Pancreas (tissue), 10 donors: ENCODE measurements at regions of chr1 and their contacts with region 1.

Region 1: GRCh38 chr1:17119773-17120480 is 676 bp upstream of the PADI2 start:
- DNase-seq: no peak
- ATAC-seq: peak in 2 of 4 donors; percentile 4 to 18
- H3K4me3 ChIP-seq: peak overlapping the region in 1 of 4 donors; percentile 34
- H3K27ac ChIP-seq: no peak overlapping the region
- H3K4me1 ChIP-seq: peaks cover 0 to 3% (median 0%) of the 10 kb centered on the region in 3 donors
- H3K27me3 ChIP-seq: no peaks in the 10 kb centered on the region
- CTCF ChIP-seq: no peak

Region 2: GRCh38 chr1:17335821-17336710 is 216.1 kb after region 1 on chr1:
- intact Hi-C with region 1: loop called in 2 of 3 experiments (anchors 5 to 10 kb)
- DNase-seq: peak; percentile 36 to 91 (median 73)
- ATAC-seq: peak; percentile 56 to 85 (median 80)
- H3K4me3 ChIP-seq: no peak overlapping the region
- H3K27ac ChIP-seq: no peak overlapping the region
- H3K4me1 ChIP-seq: no peaks in the 10 kb centered on the region
- H3K27me3 ChIP-seq: no peaks in the 10 kb centered on the region
- CTCF ChIP-seq: peak; percentile 52 to 89 (median 72)

Region 3: DNA sequence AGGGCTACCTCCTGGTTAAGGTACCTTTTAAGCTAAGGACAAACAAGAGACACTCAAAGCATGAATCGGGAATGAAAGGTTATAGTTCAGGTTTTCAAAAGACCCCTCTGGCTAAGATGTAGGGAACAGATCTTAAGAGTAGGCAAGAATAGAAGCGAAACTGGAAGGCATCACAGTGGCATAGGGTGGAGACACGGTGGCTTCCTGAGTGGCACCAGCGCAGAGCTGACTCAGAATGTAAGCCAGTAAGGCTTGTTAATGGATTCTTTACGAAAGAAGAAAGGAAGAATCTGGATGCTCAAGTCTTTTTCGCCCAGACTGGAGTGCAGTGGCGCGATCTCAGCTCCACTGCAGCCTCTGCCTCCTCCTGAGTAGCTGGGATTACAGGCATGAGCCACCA is 273.3 kb after region 1 on chr1:
- intact Hi-C with region 1: no loop called
- DNase-seq: no peak
- ATAC-seq: no peak
- H3K4me3 ChIP-seq: no peak overlapping the region
- H3K27ac ChIP-seq: no peak overlapping the region
- H3K4me1 ChIP-seq: no peaks in the 10 kb centered on the region
- H3K27me3 ChIP-seq: no peaks in the 10 kb centered on the region
- CTCF ChIP-seq: no peak

Region 4: DNA sequence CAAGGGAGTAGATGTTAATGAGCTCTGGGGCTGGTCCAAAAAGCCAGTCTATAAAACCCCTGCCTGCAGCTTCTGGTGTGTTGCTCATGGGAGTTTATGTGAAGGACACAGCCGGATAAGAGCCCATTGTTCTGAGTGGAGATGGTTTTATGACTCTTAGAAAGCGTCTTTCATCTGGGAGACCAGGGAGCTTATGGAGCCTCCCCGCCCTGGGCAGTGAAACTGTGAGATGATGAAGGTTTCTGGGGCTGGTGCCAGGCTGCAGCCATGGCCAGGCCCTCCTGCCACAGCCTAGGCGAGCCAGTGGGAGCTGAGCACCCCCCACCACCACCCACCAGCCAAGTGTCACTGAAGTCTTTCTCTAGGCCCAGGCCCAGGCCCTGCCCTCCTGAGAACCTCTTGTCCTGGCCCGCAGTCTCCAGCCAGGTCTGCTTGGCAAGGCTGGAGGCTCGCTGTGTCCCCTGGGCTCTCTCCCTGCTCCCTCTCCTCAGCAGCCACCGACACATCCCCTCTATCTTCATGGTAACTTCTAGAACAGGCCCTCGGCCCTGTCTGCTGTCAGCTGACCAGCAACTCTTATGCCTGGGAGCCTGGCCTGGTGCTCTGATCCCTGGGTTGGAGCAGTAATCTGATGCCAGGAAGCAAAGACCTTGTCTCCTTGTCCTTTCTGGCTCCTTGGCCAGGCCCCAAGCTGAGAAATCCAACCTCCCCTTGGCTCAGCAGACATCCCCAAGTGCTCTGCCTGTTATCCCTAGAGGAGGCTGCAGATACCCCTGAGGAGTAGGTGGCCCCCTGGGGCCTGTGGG is 412.0 kb after region 1 on chr1:
- intact Hi-C with region 1: no loop called
- DNase-seq: peak; percentile 63 to 86 (median 76)
- ATAC-seq: peak; percentile 79 to 89 (median 87)
- H3K4me3 ChIP-seq: no peak overlapping the region
- H3K27ac ChIP-seq: peak overlapping the region; percentile 65 to 80 (median 72)
- H3K4me1 ChIP-seq: peaks cover 2 to 9% (median 5%) of the 10 kb centered on the region in 3 donors
- H3K27me3 ChIP-seq: no peaks in the 10 kb centered on the region
- CTCF ChIP-seq: no peak